Posterior vena cava (tissue), 2 donors: ENCODE measurements at regions of chr2 and their contacts with region 1.

Region 1: GRCh38 chr2:98327776-98328175 is 18.5 kb upstream of the CNGA3 start:
- DNase-seq: no peak

Region 2: GRCh38 chr2:98359986-98360385 is 32.2 kb after region 1 on chr2:
- intact Hi-C with region 1: loop called in 1 of 2 experiments (anchors 2 kb)
- DNase-seq: no peak

Region 3: DNA sequence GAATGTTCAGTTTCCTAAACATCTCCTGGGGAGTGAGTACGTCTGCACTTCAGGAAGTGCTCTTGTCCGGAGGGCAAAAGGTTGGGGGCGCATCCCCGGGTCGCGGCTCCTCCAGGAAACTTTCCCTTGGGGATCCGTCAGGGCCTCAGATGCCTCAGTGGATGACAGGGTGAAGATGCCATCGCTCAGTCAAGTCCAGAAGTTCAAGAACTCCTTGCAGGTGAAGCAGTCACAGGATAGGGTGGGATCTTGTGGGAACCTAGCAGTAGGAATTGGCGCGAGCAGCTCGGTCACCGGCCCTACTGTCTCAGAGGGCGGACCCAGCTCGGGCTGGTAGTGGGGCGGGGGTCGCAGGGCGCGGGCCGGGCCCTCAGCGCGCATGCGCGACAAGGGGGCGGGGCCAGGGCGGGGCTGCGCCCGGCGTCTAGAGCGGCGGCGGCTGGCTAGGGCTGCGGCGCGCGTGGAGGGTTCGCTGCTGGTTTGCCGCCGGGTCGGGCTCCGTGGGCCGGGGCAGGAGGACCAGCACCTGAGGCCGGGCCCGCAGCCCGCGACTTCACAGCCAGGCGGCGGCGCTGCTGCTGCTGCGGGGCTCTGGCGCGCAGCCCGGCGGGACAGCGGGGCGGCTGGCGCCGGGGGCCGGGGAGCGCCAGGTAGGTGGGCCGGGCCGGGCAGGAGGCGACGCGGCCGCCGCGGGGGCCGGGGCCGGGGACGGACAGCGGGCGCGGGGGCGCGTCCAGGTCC is 116.8 kb after region 1 on chr2 and contains the start of gene INPP4A:
- intact Hi-C with region 1: loop called in 1 of 2 experiments (anchors 5 kb)
- DNase-seq: peak; percentile 93
- total RNA-seq, gene INPP4A: 31.5 to 42.9 TPM